ENCODE measurements at regions of chr9 and their contacts with region 1.

Region 1: DNA sequence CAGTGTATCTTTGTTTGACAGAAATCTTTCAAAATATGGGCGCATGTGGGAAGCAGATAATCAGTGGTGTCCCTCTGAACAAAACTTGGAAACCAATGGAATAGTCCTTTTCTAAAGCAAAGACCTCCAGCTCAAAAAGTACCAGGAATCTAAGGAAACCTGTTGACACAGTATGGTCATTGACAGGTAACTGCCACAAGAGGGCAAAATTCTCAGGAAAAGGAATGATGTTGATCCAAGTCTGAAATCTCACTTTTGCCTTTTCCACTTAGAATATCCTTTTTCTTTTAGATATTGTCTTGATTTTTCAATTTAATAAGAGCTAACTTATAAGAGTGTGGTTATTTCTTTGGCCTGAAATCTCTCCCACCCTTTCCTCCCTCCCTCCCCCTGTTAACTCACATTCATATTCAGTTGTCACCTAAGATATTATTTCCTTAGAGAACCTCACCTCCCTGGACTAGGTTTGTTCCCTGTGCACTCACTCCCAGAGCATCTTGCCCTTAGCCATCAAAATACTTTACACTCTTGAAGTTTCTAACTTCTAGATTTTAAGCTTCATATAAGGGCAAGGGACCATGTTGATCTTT is 59.0 kb upstream of the BARX1 start:
- DNase-seq: peak; percentile 49
- ATAC-seq: peak; percentile 41; the same call in 1 of the 2 replicates
- H3K4me3 ChIP-seq: no peak overlapping the region
- H3K27ac ChIP-seq: no peak overlapping the region
- H3K4me1 ChIP-seq: peaks cover 2% of the 10 kb centered on the region; the same call in 1 of the 2 replicates
- H3K27me3 ChIP-seq: peaks cover 4% of the 10 kb centered on the region; the same call in 1 of the 2 replicates
- CTCF ChIP-seq: peak; percentile 64
- POLR2A ChIP-seq: no peak
- RAD21 ChIP-seq: peak; percentile 60

Region 2: DNA sequence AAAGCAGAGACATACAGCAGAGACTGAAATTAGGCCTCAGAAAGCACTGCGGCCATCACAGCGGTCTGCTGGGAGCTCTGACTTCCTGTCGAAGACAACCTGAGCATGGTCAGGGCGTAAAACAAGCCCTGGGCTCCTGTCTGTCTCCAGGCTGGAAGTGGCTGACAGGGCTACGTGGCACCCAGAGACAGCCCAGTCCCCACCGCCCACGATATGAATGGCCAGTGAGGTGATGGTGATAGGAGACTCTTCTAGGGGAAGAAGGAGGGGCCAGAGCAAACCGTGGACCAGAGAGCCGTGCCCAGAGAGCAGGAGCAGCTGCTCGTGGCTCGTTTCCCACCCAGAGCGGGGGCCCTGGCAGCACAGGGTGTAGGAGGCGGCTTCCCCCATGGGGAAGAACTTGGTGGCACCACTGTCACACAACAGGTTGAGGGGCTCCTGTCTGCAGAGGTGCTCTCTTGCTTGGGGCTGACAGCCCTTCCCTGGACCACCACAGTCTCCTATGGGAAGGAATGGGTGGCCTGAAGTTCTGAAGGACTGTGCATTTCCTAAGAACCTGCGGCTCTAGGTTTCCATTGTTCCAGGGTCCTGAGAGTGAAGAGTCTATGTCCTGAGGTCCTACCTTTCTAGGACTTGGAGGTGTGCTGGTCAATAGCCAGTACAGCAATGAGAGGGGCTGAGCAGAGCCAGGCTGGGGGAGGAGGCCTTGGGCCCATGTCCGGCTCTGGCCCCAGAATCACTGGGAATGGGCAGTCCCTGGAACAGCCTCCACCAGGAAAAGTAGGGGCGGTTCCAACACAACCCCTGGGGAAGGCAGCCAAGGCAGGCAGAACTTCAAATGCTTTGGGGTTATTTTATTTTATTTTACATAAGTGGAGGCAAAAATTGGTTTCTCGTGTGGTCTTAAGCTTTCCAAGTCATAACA is 115.4 kb before region 1 on chr9:
- CTCF ChIA-PET with region 1: no interaction called
- POLR2A ChIA-PET with region 1: no interaction called
- dilution Hi-C with region 1: no loop called
- in situ Hi-C with region 1: no loop called
- intact Hi-C with region 1: no loop called
- DNase-seq: no peak
- ATAC-seq: no peak
- H3K4me3 ChIP-seq: no peak overlapping the region
- H3K27ac ChIP-seq: no peak overlapping the region
- H3K4me1 ChIP-seq: no peaks in the 10 kb centered on the region
- H3K27me3 ChIP-seq: no peaks in the 10 kb centered on the region; the same call in 1 of the 2 replicates
- CTCF ChIP-seq: no peak
- POLR2A ChIP-seq: no peak
- RAD21 ChIP-seq: no peak

Region 3: DNA sequence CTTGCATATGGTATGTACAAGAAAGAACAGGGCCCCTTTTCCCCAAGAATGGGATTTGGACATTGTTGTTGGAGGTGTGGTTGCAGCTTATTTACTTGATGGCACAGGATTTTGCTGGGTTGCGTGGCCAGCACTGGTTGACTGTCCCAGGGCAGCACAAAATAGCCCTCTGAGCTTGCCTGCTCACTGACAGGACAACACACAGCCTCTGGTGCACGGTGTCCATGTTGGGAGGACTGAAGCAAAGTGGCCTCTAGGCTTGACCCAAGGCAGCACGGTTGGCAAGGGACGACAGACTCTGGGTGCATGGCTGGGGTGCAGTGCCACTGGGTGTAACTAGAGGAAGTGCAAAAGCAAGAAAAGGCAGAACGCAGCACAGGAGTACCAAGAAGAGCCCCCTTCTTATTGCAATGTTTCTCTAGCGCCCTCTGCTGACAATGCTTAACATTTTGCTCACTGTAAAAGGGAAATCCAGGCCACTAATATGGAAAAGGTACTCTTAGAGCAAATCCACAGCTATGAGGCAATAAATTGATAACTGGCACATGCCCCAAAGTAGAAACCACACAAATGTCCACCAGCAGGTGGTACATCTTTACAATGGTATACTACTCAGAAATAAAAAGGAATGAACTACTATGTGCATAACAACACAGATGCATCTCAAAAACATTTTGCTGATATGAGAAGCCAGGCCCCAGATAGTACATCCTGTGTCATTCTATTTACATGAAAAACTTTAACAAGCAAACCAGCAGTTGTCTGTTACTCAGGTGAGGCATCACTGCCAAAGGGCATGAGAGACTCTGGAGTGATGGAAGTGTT is 11.6 kb before region 1 on chr9:
- CTCF ChIA-PET with region 1: interaction called, 11 read pairs
- POLR2A ChIA-PET with region 1: no interaction called
- dilution Hi-C with region 1: no loop called
- in situ Hi-C with region 1: no loop called
- intact Hi-C with region 1: no loop called
- DNase-seq: peak; percentile 50
- ATAC-seq: peak; percentile 75
- H3K4me3 ChIP-seq: no peak overlapping the region
- H3K27ac ChIP-seq: no peak overlapping the region
- H3K4me1 ChIP-seq: no peaks in the 10 kb centered on the region
- H3K27me3 ChIP-seq: 0 out of 2 replicates have a peak, but pooled peaks cover 1% of the 10 kb centered on the region
- CTCF ChIP-seq: peak; percentile 61
- POLR2A ChIP-seq: no peak
- RAD21 ChIP-seq: peak; percentile 46

Region 4: GRCh38 chr9:94207781-94208180 is 193.6 kb after region 1 on chr9:
- CTCF ChIA-PET with region 1: interaction called, 5 read pairs
- POLR2A ChIA-PET with region 1: no interaction called
- dilution Hi-C with region 1: no loop called
- in situ Hi-C with region 1: loop called (anchors 5 kb)
- intact Hi-C with region 1: no loop called
- DNase-seq: no peak
- ATAC-seq: no peak
- H3K4me3 ChIP-seq: no peak overlapping the region
- H3K27ac ChIP-seq: no peak overlapping the region
- H3K4me1 ChIP-seq: peaks cover 2% of the 10 kb centered on the region
- H3K27me3 ChIP-seq: no peaks in the 10 kb centered on the region
- CTCF ChIP-seq: no peak
- POLR2A ChIP-seq: no peak
- RAD21 ChIP-seq: no peak

Region 5: DNA sequence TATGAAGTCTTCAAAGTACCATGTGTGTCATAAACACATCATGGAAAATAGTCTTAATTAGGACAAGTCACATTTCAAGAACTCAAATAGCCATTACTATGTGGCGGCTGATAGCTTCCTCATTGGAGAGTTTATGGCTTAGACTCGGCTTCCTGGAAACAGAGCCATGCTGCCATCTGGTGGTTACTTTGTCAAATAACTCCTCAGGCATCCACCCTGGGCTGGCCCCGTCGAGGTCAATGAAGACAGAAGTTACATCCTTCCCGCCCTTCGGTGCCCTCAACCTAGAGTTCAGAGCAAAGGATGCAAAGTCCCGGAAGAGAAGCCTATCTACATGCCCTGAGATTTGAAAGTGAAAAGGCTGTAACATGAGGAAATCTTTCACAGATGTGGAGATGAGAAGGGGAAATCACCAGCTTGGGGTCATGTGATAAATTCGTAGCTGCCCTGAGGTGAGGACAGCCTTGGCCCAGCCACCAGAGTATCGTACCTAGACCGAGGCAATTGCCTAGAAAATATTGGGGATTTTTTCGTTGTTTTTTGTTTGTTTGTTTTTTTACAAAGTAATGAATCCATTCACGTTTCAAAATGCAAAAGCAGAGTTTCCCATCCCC is 199.5 kb after region 1 on chr9:
- CTCF ChIA-PET with region 1: interaction called, 22 read pairs
- POLR2A ChIA-PET with region 1: no interaction called
- dilution Hi-C with region 1: no loop called
- in situ Hi-C with region 1: loop called (anchors 5 kb)
- intact Hi-C with region 1: loop called (anchors 1 kb)
- DNase-seq: peak; percentile 72
- ATAC-seq: peak; percentile 98
- H3K4me3 ChIP-seq: no peak overlapping the region
- H3K27ac ChIP-seq: no peak overlapping the region
- H3K4me1 ChIP-seq: peaks cover 2% of the 10 kb centered on the region
- H3K27me3 ChIP-seq: peaks cover 2% of the 10 kb centered on the region; the same call in 1 of the 2 replicates
- CTCF ChIP-seq: peak; percentile 96
- POLR2A ChIP-seq: peak; percentile 54; the same call in 1 of the 2 replicates
- RAD21 ChIP-seq: peak; percentile 99

Region 6: DNA sequence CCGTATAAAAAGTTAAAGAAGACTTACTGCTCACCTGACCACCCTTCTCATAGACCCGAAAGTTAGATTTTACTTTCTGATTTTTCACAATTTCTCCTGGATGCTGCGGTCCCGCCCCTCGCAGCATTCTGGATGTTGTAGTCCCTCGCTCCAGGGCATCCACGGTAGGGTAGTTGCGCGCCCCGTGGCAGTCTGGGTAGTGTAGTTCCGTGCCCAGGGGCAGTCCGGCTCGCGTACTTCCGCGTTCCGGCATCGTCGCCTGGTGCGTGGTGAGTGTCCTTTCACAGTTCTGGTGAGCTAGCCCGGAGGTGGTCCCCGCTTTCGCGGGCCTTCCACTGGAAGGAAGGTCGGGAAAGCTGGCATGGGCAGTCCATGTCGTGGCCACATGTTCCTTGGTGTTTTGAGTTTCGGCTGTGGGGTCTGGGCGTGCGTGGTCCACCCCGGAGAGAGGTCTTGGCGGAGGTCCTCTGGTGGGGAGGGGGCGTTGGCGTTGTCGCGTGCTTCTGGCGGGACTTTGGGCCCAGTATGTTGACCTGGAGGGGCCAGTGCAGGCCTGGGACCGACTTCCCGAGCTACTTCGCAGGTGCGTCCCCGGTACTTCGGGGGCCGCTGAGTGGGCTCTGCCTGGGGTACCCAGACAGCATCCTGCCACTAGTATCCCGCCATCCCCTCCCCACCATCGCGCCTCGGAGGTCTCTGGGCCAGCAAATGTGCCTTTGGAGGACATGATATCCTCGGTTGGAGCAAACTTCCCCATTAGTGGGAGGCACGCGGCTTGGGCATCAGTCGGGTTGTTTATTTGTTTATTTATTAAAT is 245.1 kb after region 1 on chr9 and contains the start of gene ZNF169:
- CTCF ChIA-PET with region 1: no interaction called
- POLR2A ChIA-PET with region 1: no interaction called
- dilution Hi-C with region 1: no loop called
- in situ Hi-C with region 1: no loop called
- intact Hi-C with region 1: no loop called
- DNase-seq: peak; percentile 82
- ATAC-seq: peak; percentile 100
- H3K4me3 ChIP-seq: peak within 1 kb of the TSS; percentile 66
- H3K27ac ChIP-seq: peak within 1 kb of the TSS; percentile 65
- H3K4me1 ChIP-seq: no peaks in the 10 kb centered on the region
- H3K27me3 ChIP-seq: peaks cover 3% of the 10 kb centered on the region; the same call in 1 of the 2 replicates
- CTCF ChIP-seq: no peak
- POLR2A ChIP-seq: peak; percentile 57
- RAD21 ChIP-seq: no peak
- total RNA-seq, gene ZNF169: 2.7 and 4.4 TPM in 2 replicates

Measured in IMR-90 (cell line).